ENCODE measurements at regions of chr1 and their contacts with region 1.

Region 1: GRCh38 chr1:109532365-109533136 is 7.1 kb upstream of the GPR61 start:
- DNase-seq: peak; percentile 48 to 91
- H3K4me3 ChIP-seq: peak overlapping the region; percentile 11 to 44
- H3K27ac ChIP-seq: peak overlapping the region; percentile 45 to 64
- H3K4me1 ChIP-seq: peaks cover 0 to 4% of the 10 kb centered on the region in 2 donors
- H3K27me3 ChIP-seq: no peaks in the 10 kb centered on the region
- CTCF ChIP-seq: peak; percentile 95 to 98 (median 97)

Region 2: DNA sequence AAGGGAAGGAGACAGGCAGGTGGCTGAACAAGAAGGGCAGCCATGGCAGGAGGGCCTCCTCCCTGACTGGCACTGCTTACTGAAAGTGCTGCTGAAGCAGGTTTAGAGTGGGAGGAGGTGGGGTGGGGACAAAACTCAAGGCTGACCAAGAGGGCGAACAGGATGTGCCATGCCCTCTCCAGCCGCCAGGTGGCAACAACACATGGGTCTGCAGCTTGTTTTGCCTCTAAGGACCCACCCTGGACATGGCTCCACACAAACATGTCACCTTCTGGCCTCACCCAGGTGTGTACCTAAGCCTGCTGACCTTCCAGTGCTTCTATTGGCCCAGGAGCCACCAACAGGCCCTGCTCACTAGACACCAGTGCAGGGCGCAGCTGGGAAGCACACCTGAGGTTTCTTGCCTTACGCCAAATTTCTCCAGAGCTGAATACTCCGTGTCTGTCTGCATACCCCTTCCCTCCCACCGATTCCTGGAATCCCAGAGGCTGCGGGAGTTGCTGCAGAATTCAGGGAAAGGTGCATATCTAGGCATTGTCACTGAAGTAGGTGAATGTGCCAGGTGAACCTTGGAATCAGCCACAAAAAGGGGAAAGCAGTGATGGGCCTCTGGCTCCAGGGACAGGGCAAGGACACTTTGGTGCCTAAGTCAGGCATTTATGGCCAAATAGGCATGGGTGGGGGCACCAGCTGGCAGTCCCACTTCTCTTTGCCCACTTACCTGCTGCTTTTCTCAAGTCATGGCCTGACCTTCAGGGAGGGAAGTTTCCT is 254.9 kb before region 1 on chr1:
- intact Hi-C with region 1: loop called (anchors 5 kb)
- DNase-seq: peak in 1 of 2 donors; percentile 90
- H3K4me3 ChIP-seq: no peak overlapping the region
- H3K27ac ChIP-seq: no peak overlapping the region
- H3K4me1 ChIP-seq: peaks cover 0 to 10% of the 10 kb centered on the region in 2 donors
- H3K27me3 ChIP-seq: no peaks in the 10 kb centered on the region
- CTCF ChIP-seq: peak; percentile 89 to 91 (median 89)

Region 3: DNA sequence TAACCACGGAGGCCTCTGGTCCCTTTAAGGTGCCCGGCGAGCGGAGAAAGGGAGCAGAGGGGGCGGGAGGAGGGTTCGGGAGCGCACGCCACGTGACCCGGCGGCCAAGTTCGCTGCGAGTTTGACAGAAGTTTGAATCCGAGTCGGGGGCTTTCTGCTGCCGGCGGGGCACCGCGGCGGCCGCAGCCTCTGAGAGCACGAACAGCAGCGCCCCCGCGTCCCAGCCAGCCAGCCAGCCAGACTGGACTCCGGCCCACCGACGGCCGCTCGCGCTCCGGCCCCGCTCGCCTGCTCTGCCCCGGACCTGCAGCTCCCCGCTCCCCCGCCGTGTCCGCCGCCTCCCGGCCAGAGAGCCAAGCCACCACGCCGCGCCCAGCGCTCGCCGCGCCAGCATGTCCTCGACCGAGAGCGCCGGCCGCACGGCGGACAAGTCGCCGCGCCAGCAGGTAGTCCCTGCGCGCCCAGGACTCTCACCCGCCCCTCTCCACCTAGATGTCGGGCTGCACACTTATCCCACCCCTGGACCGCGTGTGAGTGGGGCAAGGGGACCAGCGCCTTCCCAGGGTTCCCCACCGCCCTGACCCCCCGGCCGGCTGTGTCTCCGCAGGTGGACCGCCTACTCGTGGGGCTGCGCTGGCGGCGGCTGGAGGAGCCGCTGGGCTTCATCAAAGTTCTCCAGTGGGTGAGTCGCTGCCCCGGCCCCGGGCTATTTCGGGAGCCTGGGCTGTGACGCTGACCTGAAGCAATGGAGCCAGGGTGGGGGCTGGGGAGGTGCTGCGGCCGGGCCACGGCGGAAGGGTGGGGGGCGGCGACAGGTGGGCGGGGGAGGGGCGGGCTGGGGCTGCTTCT is 65.9 kb before region 1 on chr1 and contains the start of gene SYPL2:
- intact Hi-C with region 1: loop called (anchors 2 kb)
- DNase-seq: peak in 1 of 2 donors; percentile 82
- H3K4me3 ChIP-seq: peak within 1 kb of the TSS; percentile 57 to 91
- H3K27ac ChIP-seq: peak within 1 kb of the TSS; percentile 74 to 92
- H3K4me1 ChIP-seq: no peaks in the 10 kb centered on the region
- H3K27me3 ChIP-seq: no peaks in the 10 kb centered on the region
- CTCF ChIP-seq: peak in 1 of 3 experiments; percentile 9
- total RNA-seq, gene SYPL2: 8.1 TPM

Region 4: GRCh38 chr1:109482791-109483671 is 49.5 kb before region 1 on chr1:
- intact Hi-C with region 1: no loop called
- DNase-seq: peak in 1 of 2 donors; percentile 67
- H3K4me3 ChIP-seq: peak overlapping the region; percentile 74 to 79
- H3K27ac ChIP-seq: peak overlapping the region; percentile 32 to 38
- H3K4me1 ChIP-seq: peaks cover 6 to 12% of the 10 kb centered on the region in 2 donors
- H3K27me3 ChIP-seq: no peaks in the 10 kb centered on the region
- CTCF ChIP-seq: no peak

Region 5: DNA sequence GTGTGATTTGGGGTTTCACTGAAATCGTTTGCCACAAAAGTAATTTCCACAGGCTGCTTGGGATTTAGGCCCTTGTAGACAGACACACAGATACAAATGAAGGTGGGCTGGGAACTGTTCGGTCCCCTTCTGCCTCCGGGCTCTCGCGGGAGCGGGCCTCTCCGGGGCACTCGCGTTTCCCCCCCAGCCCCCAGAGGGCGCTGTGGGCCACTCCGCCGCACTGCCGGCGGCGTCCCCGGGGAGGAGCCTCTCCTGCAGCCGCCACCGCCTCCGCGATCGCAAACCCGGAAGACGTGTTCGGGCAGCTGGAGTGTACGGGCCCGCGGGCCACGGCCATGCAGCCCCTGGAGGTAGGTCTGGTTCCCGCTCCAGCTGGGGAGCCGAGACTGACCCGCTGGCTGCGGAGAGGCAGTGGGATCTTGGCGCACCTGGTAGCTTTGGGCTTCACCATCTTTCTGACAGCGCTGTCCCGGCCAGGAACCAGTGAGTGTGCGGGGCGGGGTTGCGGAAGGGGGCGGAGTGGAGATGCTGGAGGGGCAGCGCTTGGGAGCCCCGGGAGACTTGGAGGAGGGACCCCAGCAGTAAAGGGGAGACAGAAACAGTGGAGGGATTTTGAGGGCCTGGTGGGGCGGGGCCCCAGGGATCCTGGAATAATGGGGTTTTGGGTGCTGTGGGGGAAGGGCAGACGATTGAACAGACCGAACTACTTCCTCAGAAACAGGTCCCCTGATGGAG is 38.6 kb before region 1 on chr1 and contains the start of gene CYB561D1:
- intact Hi-C with region 1: loop called (anchors 1 kb)
- DNase-seq: peak; percentile 35 to 92
- H3K4me3 ChIP-seq: peak within 1 kb of the TSS; percentile 61 to 89
- H3K27ac ChIP-seq: peak within 1 kb of the TSS; percentile 78 to 84
- H3K4me1 ChIP-seq: peaks cover 7 to 18% of the 10 kb centered on the region in 2 donors
- H3K27me3 ChIP-seq: no peaks in the 10 kb centered on the region
- CTCF ChIP-seq: peak; percentile 92 to 98 (median 95)
- total RNA-seq, gene CYB561D1: 26.8 TPM

Region 6: GRCh38 chr1:109570417-109570827 is 37.9 kb after region 1 on chr1:
- intact Hi-C with region 1: no loop called
- DNase-seq: no peak
- H3K4me3 ChIP-seq: no peak overlapping the region
- H3K27ac ChIP-seq: peak overlapping the region in 1 of 2 donors; percentile 0
- H3K4me1 ChIP-seq: peaks cover 5 to 19% of the 10 kb centered on the region in 2 donors
- H3K27me3 ChIP-seq: no peaks in the 10 kb centered on the region
- CTCF ChIP-seq: no peak

Region 7: DNA sequence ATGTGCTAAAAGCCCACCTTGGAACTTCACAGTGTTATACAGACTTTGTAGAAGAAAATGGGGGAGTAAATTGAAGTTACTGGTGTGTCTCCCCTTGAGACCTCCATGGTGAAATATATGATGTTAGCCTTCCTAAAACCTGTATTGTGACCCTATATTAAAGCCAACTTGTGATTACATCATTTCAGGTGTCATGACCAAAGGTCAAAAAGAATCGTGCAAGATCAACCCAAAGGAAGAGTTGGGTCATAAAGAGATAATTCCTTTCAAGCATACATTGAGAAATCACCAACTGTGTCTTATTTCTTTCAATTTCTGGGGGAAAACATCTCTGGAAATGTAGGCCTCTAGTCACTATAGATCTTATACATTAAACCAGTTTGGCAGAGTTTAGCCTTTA is 52.2 kb after region 1 on chr1:
- intact Hi-C with region 1: no loop called
- DNase-seq: no peak
- H3K4me3 ChIP-seq: no peak overlapping the region
- H3K27ac ChIP-seq: no peak overlapping the region
- H3K4me1 ChIP-seq: no peaks in the 10 kb centered on the region
- H3K27me3 ChIP-seq: no peaks in the 10 kb centered on the region
- CTCF ChIP-seq: no peak

Region 8: GRCh38 chr1:109873278-109874175 is 341.0 kb after region 1 on chr1:
- intact Hi-C with region 1: no loop called
- DNase-seq: peak in 1 of 2 donors; percentile 52
- H3K4me3 ChIP-seq: no peak overlapping the region
- H3K27ac ChIP-seq: peak overlapping the region; percentile 51 to 55
- H3K4me1 ChIP-seq: peaks cover 11 to 37% of the 10 kb centered on the region in 2 donors
- H3K27me3 ChIP-seq: no peaks in the 10 kb centered on the region
- CTCF ChIP-seq: no peak

Measured in ascending aorta (tissue), 2 donors.